Natural killer cell (primary cell): ENCODE measurements at regions of chr9 and their contacts with region 1.

Region 1: GRCh38 chr9:137034863-137035761 is 3.2 kb upstream of the FUT7 start:
- DNase-seq: peak; percentile 83 to 96
- ATAC-seq: peak; percentile 76 to 84 (median 81)
- H3K4me3 ChIP-seq: peak overlapping the region; percentile 9
- H3K4me3 Mint-ChIP-seq: peak overlapping the region; percentile 81
- H3K27ac ChIP-seq: peak overlapping the region; percentile 69
- H3K27ac Mint-ChIP-seq: peak overlapping the region; percentile 76 to 83
- H3K4me1 ChIP-seq: peaks cover 56% of the 10 kb centered on the region
- H3K4me1 Mint-ChIP-seq: peaks cover 29 to 46% of the 10 kb centered on the region in 2 donors
- H3K27me3 ChIP-seq: no peaks in the 10 kb centered on the region
- H3K27me3 Mint-ChIP-seq: no peaks in the 10 kb centered on the region
- CTCF ChIP-seq: peak; percentile 94

Region 2: DNA sequence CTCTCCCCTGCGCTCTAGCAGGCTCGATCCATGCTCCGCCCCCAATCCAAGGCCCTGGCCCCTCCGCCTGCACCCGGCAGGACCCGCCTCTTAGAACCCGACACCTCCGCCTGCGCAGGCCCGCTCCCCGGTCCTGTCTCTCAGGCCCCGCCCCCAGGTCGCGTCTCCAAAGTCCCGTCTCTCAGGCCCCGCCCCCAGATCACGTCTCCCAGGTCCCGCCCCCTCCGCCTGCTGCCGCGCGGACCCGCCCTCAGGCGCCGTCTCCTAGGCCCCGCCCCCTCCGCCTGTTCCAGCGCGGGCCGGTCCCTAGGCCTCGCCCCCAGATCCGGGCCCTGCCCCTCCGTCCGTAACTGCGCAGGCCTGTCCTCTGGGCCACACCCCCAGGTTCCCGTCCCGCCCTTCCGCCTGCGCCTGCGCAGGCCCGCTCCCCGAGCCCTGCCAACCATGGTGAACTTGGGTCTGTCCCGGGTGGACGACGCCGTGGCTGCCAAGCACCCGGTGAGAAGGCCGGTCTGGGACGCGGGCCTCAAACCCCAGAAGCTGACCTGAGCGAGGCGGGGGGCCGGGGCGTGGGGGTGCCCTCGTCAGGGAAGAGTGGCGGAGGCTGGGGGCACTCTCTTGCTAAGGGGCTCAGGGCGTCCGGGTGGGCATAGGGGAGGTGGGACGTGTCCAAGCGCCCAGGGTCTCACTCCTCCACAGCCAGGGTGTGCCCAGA is 244.0 kb before region 1 on chr9 and contains the start of gene TMEM141:
- intact Hi-C with region 1: loop called (anchors 1 kb)
- DNase-seq: peak; percentile 99 to 100
- ATAC-seq: peak; percentile 84 to 96 (median 86)
- H3K4me3 ChIP-seq: peak within 1 kb of the TSS; percentile 66
- H3K4me3 Mint-ChIP-seq: peak within 1 kb of the TSS; percentile 80
- H3K27ac ChIP-seq: peak within 1 kb of the TSS; percentile 88
- H3K27ac Mint-ChIP-seq: peak within 1 kb of the TSS; percentile 89 to 91
- H3K4me1 ChIP-seq: peaks cover 43% of the 10 kb centered on the region
- H3K4me1 Mint-ChIP-seq: peaks cover 28 to 34% of the 10 kb centered on the region in 2 donors
- H3K27me3 ChIP-seq: no peaks in the 10 kb centered on the region
- H3K27me3 Mint-ChIP-seq: peaks cover 0 to 4% of the 10 kb centered on the region in 2 donors
- CTCF ChIP-seq: no peak
- total RNA-seq, gene TMEM141: 22.4 to 26.9 (median 26.6) TPM

Region 3: GRCh38 chr9:136949817-136950655 is 85.1 kb before region 1 on chr9:
- intact Hi-C with region 1: loop called (anchors 2 kb)
- DNase-seq: peak; percentile 97
- ATAC-seq: peak; percentile 95 to 96 (median 95)
- H3K4me3 ChIP-seq: peak overlapping the region; percentile 75
- H3K4me3 Mint-ChIP-seq: peak overlapping the region; percentile 93
- H3K27ac ChIP-seq: peak overlapping the region; percentile 83
- H3K27ac Mint-ChIP-seq: peak overlapping the region; percentile 81 to 92
- H3K4me1 ChIP-seq: peaks cover 50% of the 10 kb centered on the region
- H3K4me1 Mint-ChIP-seq: peaks cover 1 to 34% of the 10 kb centered on the region in 2 donors
- H3K27me3 ChIP-seq: no peaks in the 10 kb centered on the region
- H3K27me3 Mint-ChIP-seq: no peaks in the 10 kb centered on the region
- CTCF ChIP-seq: peak; percentile 28

Region 4: DNA sequence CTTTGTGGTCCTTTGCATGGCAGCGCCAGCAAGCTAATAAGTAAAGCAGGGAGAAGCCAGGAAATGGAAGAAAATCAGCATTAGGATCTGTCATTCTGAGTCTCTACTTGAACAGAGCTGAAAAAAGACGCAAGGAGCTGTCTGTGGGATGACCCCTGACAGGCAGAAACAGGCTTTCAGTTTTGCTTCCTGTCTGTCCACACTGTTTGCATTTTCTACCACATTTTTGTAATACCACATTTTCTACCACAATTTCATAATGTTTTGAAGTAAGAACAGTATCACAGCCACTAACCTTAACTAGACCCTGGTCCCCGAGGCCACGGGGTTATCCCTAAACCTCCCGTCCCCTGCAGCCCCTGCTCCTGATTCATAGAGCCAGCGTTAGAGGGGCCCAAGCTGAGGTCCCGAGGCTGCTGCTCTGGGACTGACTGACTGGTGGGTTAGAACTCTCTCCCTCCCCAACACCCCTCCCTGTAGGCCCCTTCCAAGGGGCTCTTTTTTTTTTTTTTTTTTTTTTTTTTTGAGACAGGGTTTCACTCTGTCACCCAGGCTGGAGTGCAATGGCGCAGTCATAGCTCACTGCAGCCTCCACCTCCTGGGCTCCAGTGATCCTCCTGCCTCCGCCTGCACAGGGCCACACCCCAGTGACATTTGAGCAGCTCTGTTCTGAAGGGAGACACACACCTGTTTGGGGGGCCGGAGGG is 34.8 kb before region 1 on chr9:
- intact Hi-C with region 1: loop called (anchors 2 kb)
- DNase-seq: peak; percentile 56 to 70
- ATAC-seq: peak; percentile 35 to 63 (median 44)
- H3K4me3 ChIP-seq: no peak overlapping the region
- H3K4me3 Mint-ChIP-seq: peak overlapping the region; percentile 84
- H3K27ac ChIP-seq: peak overlapping the region; percentile 77
- H3K27ac Mint-ChIP-seq: peak overlapping the region; percentile 97 to 99
- H3K4me1 ChIP-seq: peaks cover 77% of the 10 kb centered on the region
- H3K4me1 Mint-ChIP-seq: peaks cover 32 to 54% of the 10 kb centered on the region in 2 donors
- H3K27me3 ChIP-seq: no peaks in the 10 kb centered on the region
- H3K27me3 Mint-ChIP-seq: no peaks in the 10 kb centered on the region
- CTCF ChIP-seq: no peak

Region 5: DNA sequence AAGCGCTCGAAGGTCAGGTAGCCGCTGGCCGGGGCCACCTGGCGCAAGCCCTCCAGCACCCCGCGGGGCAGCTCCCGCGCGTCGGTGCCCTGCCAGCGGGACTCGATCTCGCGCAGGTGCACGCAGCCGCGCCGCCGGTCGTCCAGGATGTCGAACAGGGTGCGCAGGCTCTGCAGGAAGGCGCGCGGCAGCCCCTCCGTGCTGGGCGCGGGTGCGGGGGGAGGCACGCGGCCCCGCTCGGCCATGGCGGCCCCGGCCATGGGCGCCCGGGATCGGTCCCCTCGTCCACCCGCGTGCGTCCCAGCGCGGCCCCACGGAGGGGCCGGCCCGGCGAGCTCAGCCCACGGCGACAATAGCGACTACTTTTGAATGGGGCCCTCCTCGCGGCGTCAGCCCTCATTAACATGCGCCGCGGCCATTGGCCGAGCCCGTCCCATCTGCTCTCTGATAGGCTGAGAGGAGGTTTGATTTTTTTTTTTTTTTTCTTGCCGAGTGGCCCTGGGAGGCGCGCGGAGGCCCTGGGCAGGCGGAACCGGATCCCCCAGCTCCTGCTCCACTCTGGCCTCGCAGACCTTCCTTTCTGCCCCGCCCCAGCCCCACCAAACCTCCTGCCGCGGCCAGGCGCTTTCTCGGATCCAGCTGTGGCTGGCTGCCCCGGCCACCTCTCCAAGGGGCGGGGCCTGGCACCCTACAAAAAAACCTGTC is 35.2 kb after region 1 on chr9 and contains the start of gene SAPCD2:
- intact Hi-C with region 1: no loop called
- DNase-seq: peak; percentile 84 to 93
- ATAC-seq: peak; percentile 88 to 95 (median 91)
- H3K4me3 ChIP-seq: peak within 1 kb of the TSS; percentile 35
- H3K4me3 Mint-ChIP-seq: peak within 1 kb of the TSS; percentile 82
- H3K27ac ChIP-seq: peak within 1 kb of the TSS; percentile 59
- H3K27ac Mint-ChIP-seq: peak within 1 kb of the TSS; percentile 64 to 81
- H3K4me1 ChIP-seq: peaks cover 25% of the 10 kb centered on the region
- H3K4me1 Mint-ChIP-seq: peaks cover 4 to 26% of the 10 kb centered on the region in 2 donors
- H3K27me3 ChIP-seq: no peaks in the 10 kb centered on the region
- H3K27me3 Mint-ChIP-seq: no peaks in the 10 kb centered on the region
- CTCF ChIP-seq: peak; percentile 3
- total RNA-seq, gene SAPCD2: 0.59 to 2.6 (median 1.0) TPM